HepG2 (cell line): ENCODE measurements at regions of chr19 and their contacts with region 1.

Region 1: GRCh38 chr19:45886427-45887199 is 672 bp upstream of the IRF2BP1 start:
- DNase-seq: peak; percentile 88
- ATAC-seq: peak; percentile 46
- H3K4me3 ChIP-seq: peak overlapping the region; percentile 69 to 91 (median 80)
- H3K27ac ChIP-seq: peak overlapping the region; percentile 78
- H3K4me1 ChIP-seq: peaks cover 30% of the 10 kb centered on the region
- H3K27me3 ChIP-seq: no peaks in the 10 kb centered on the region
- CTCF ChIP-seq: no peak
- EP300 ChIP-seq: no peak
- POLR2A ChIP-seq: peak in 1 of 2 experiments; percentile 61; a peak in 3 of 4 replicates
- RAD21 ChIP-seq: no peak

Region 2: GRCh38 chr19:45804140-45804958 is 82.3 kb before region 1 on chr19:
- CTCF ChIA-PET with region 1: no interaction called
- POLR2A ChIA-PET with region 1: no interaction called
- in situ Hi-C with region 1: no loop called
- intact Hi-C with region 1: no loop called
- DNase-seq: no peak
- ATAC-seq: no peak
- H3K4me3 ChIP-seq: no peak overlapping the region
- H3K27ac ChIP-seq: no peak overlapping the region
- H3K4me1 ChIP-seq: peaks cover 21% of the 10 kb centered on the region
- H3K27me3 ChIP-seq: peaks cover 1 to 17% of the 10 kb centered on the region in 2 experiments; a peak in 3 of 5 replicates
- CTCF ChIP-seq: no peak
- EP300 ChIP-seq: no peak
- POLR2A ChIP-seq: no peak
- RAD21 ChIP-seq: no peak

Region 3: GRCh38 chr19:45817010-45817724 is 69.4 kb before region 1 on chr19:
- CTCF ChIA-PET with region 1: interaction called, 50 read pairs
- POLR2A ChIA-PET with region 1: interaction called, 13 read pairs
- in situ Hi-C with region 1: no loop called
- intact Hi-C with region 1: loop called (anchors 1 kb)
- DNase-seq: peak; percentile 87
- ATAC-seq: peak; percentile 87
- H3K4me3 ChIP-seq: no peak overlapping the region
- H3K27ac ChIP-seq: no peak overlapping the region
- H3K4me1 ChIP-seq: no peaks in the 10 kb centered on the region
- H3K27me3 ChIP-seq: no peaks in the 10 kb centered on the region
- CTCF ChIP-seq: peak; percentile 95
- EP300 ChIP-seq: no peak
- POLR2A ChIP-seq: no peak
- RAD21 ChIP-seq: peak; percentile 80

Region 4: GRCh38 chr19:45876411-45877197 is 10.0 kb before region 1 on chr19:
- CTCF ChIA-PET with region 1: interaction called, 11 read pairs
- POLR2A ChIA-PET with region 1: interaction called, 388 read pairs
- in situ Hi-C with region 1: no loop called
- intact Hi-C with region 1: no loop called
- DNase-seq: peak; percentile 77
- ATAC-seq: peak; percentile 60
- H3K4me3 ChIP-seq: peak overlapping the region; percentile 43 to 69 (median 51)
- H3K27ac ChIP-seq: peak overlapping the region; percentile 94
- H3K4me1 ChIP-seq: peaks cover 95% of the 10 kb centered on the region
- H3K27me3 ChIP-seq: no peaks in the 10 kb centered on the region
- CTCF ChIP-seq: peak; percentile 25; the same call in 1 of the 2 replicates
- EP300 ChIP-seq: peak in 1 of 2 experiments; percentile 53; a peak in 1 of 4 replicates
- POLR2A ChIP-seq: peak in 1 of 2 experiments; percentile 56; a peak in 2 of 4 replicates
- RAD21 ChIP-seq: peak; percentile 17; the same call in 1 of the 2 replicates

Region 5: GRCh38 chr19:45902651-45903625 is 16.3 kb after region 1 on chr19:
- CTCF ChIA-PET with region 1: interaction called, 4 read pairs
- POLR2A ChIA-PET with region 1: interaction called, 23 read pairs
- in situ Hi-C with region 1: no loop called
- intact Hi-C with region 1: no loop called
- DNase-seq: peak; percentile 94
- ATAC-seq: peak; percentile 85
- H3K4me3 ChIP-seq: peak overlapping the region; percentile 50 to 83 (median 66)
- H3K27ac ChIP-seq: peak overlapping the region; percentile 42
- H3K4me1 ChIP-seq: peaks cover 40% of the 10 kb centered on the region
- H3K27me3 ChIP-seq: peaks cover 0 to 3% of the 10 kb centered on the region in 2 experiments; a peak in 2 of 5 replicates
- CTCF ChIP-seq: peak; percentile 17; the same call in 1 of the 2 replicates
- EP300 ChIP-seq: no peak
- POLR2A ChIP-seq: peak; percentile 21 to 70; a peak in 2 of 4 replicates
- RAD21 ChIP-seq: peak; percentile 43; the same call in 1 of the 2 replicates